ENCODE measurements at regions of chr10 and their contacts with region 1.

Region 1: DNA sequence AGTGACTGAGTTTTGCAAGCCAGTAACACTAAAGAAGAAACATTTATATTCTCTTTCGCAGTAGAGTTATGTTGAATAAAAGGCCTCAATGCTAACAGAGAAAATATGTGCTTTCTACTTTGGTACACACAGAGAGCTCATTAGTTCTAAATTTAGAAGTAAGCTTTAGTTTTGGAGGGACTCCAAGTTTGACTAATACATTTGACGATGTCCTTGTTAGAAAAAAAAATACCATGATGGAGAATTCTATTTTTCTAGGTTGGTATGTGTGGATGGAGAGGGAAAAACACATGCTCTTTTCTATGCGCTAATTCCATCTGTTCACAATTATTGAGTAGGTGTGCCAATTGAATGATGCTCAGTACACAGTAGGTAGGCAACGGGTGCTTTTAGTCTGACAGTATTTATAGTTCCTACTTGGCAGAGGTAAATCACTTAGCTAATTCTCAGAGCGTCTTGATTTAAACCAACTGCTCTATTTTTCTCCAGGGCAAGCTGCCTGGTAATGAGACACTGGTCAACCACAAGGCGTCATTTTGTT is 327.2 kb upstream of the AKR1E2 start:
- DNase-seq: peak; percentile 4
- H3K4me3 ChIP-seq: no peak overlapping the region
- H3K27ac ChIP-seq: peak overlapping the region in 1 of 2 donors; percentile 53
- H3K4me1 ChIP-seq: peaks cover 5% of the 10 kb centered on the region
- H3K27me3 ChIP-seq: no peaks in the 10 kb centered on the region
- CTCF ChIP-seq: no peak
- POLR2A ChIP-seq: no peak

Region 2: GRCh38 chr10:3197348-3198003 is 1301.3 kb before region 1 on chr10:
- intact Hi-C with region 1: loop called (anchors 10 kb)
- DNase-seq: peak; percentile 74
- H3K4me3 ChIP-seq: no peak overlapping the region
- H3K27ac ChIP-seq: no peak overlapping the region
- H3K4me1 ChIP-seq: no peaks in the 10 kb centered on the region
- H3K27me3 ChIP-seq: no peaks in the 10 kb centered on the region
- CTCF ChIP-seq: peak; percentile 66 to 92 (median 82)
- POLR2A ChIP-seq: no peak

Region 3: GRCh38 chr10:3749600-3749999 is 749.2 kb before region 1 on chr10:
- intact Hi-C with region 1: loop called (anchors 5 kb)
- DNase-seq: peak; percentile 51
- H3K4me3 ChIP-seq: no peak overlapping the region
- H3K27ac ChIP-seq: peak overlapping the region; percentile 52 to 65
- H3K4me1 ChIP-seq: no peaks in the 10 kb centered on the region
- H3K27me3 ChIP-seq: no peaks in the 10 kb centered on the region
- CTCF ChIP-seq: no peak
- POLR2A ChIP-seq: no peak

Region 4: GRCh38 chr10:4307910-4308309 is 190.9 kb before region 1 on chr10:
- intact Hi-C with region 1: no loop called
- DNase-seq: peak; percentile 45
- H3K4me3 ChIP-seq: no peak overlapping the region
- H3K27ac ChIP-seq: peak overlapping the region; percentile 7 to 51
- H3K4me1 ChIP-seq: no peaks in the 10 kb centered on the region
- H3K27me3 ChIP-seq: no peaks in the 10 kb centered on the region
- CTCF ChIP-seq: no peak
- POLR2A ChIP-seq: no peak

Region 5: GRCh38 chr10:4344511-4344994 is 154.2 kb before region 1 on chr10:
- intact Hi-C with region 1: no loop called
- DNase-seq: no peak
- H3K4me3 ChIP-seq: no peak overlapping the region
- H3K27ac ChIP-seq: no peak overlapping the region
- H3K4me1 ChIP-seq: no peaks in the 10 kb centered on the region
- H3K27me3 ChIP-seq: no peaks in the 10 kb centered on the region
- CTCF ChIP-seq: no peak
- POLR2A ChIP-seq: no peak